ENCODE measurements at regions of chr16 and their contacts with region 1.

Region 1: DNA sequence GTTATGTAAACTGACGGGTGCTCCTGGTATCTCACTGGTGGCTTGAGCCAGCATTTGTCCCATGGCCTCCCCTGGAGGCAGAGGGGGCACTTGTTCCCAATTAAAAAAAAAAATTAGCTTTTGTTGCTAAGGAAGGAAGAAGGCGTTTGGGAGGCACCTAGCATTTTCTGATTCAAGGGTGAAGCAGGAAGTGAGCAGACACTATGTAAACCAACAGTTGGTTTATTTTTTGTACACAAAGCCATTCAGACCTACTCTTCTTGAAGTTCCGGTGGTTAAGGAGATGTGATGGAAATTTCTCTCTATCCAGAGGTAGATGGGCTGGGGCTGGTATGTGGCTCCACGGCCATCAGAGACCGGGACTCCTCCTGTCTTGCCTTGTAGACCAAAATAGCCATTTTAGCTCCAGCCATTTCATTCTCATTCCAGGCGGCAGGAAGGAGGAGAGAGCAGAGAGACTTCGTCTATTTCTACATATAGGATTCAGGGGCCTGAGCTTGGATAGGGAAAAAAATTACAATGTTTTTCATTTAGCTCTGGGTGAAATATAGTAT is 103.0 kb downstream of the SNX29 start:
- DNase-seq: peak in 2 of 5 donors; percentile 24 to 54
- H3K4me3 ChIP-seq: peak overlapping the region; percentile 1
- H3K4me3 Mint-ChIP-seq: peak overlapping the region; percentile 55 to 92 (median 64)
- H3K27ac ChIP-seq: peak overlapping the region; percentile 25
- H3K27ac Mint-ChIP-seq: peak overlapping the region; percentile 76 to 97 (median 92)
- H3K4me1 ChIP-seq: peaks cover 68% of the 10 kb centered on the region
- H3K4me1 Mint-ChIP-seq: peaks cover 61 to 82% (median 73%) of the 10 kb centered on the region in 3 donors
- H3K27me3 ChIP-seq: no peaks in the 10 kb centered on the region
- H3K27me3 Mint-ChIP-seq: no peaks in the 10 kb centered on the region

Region 2: DNA sequence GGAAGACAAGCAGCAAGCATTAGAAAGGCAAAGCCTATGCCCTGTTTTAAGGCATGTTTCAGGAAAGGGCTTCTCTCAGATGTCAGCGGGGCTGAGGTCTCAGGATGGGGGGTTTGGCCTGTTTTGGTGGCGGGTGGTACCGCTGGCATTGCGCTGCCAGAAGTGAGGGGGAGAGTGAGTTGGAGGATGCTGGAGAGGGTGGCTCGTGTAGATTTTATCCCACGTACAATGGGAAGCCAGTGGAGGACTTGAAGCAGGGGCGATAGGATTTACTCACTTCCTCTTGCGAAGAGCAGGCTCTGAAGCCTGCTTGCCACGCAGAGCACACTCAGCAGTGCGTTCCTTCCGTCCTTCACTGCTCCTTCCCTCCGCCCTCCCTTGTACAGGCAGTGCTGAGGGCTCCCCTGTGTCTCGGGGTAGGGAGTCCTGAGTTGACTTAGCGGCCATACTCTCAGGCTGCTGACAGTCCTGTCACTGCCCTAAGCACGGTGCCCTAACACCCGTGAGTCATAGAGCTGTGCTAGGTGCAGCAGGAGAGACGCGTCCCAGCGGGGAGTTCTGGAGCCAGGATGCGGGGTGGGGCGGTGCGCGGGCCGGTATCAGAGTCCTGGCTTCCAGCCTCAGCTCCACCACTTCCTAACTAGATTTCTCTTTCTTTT is 10.1 kb after region 1 on chr16:
- CTCF ChIA-PET with region 1: interaction called, 38 read pairs
- POLR2A ChIA-PET with region 1: interaction called, 5 read pairs
- DNase-seq: peak in 1 of 5 donors; percentile 47
- H3K4me3 ChIP-seq: peak overlapping the region; percentile 1
- H3K4me3 Mint-ChIP-seq: peak overlapping the region in 6 of 7 donors; percentile 42 to 65 (median 55)
- H3K27ac ChIP-seq: no peak overlapping the region
- H3K27ac Mint-ChIP-seq: peak overlapping the region in 6 of 8 donors; percentile 36 to 85 (median 69)
- H3K4me1 ChIP-seq: peaks cover 31% of the 10 kb centered on the region
- H3K4me1 Mint-ChIP-seq: peaks cover 25 to 36% (median 29%) of the 10 kb centered on the region in 3 donors
- H3K27me3 ChIP-seq: no peaks in the 10 kb centered on the region
- H3K27me3 Mint-ChIP-seq: no peaks in the 10 kb centered on the region

Measured in CD8-positive, alpha-beta memory T cell (primary cell).